Posterior cingulate gyrus (tissue), 11 donors: ENCODE measurements at regions of chr22 and their contacts with region 1.

Region 1: GRCh38 chr22:23849009-23850006 is 8.4 kb upstream of the SLC2A11 start:
- DNase-seq: peak; percentile 69 to 98 (median 88)

Region 2: DNA sequence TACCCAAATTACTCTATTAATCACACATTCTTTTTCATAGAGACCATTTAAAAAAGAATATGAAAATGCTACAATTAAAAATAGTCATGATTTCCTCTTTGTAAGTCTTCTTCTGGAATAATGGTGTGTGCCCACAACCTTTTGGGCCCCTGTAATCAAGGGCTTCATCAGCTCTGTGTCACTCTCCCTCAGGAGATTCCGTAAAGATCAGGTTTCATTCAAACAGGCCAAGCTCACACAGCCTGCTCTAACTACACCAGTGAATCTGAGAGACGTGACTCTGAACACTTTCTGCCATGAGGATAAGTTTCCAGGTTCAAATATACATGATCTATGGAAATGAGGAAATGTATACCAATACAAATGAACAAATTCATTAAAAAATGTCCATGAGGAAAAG is 226.7 kb before region 1 on chr22:
- intact Hi-C with region 1: loop called (anchors 10 kb)
- DNase-seq: no peak

Region 3: GRCh38 chr22:23767673-23768548 is 81.4 kb before region 1 on chr22 and contains the start of gene CHCHD10:
- intact Hi-C with region 1: loop called (anchors 5 kb)
- DNase-seq: peak; percentile 79 to 98 (median 90)